ENCODE measurements at regions of chr10 and their contacts with region 1.

Region 1: GRCh38 chr10:63976538-63976937 is 455.3 kb downstream of the REEP3 start:
- DNase-seq: peak in 2 of 3 donors; percentile 19 to 65
- ATAC-seq: peak; percentile 64 to 80
- H3K4me3 ChIP-seq: no peak overlapping the region
- H3K27ac ChIP-seq: no peak overlapping the region
- H3K4me1 ChIP-seq: no peaks in the 10 kb centered on the region
- H3K27me3 ChIP-seq: no peaks in the 10 kb centered on the region

Region 2: DNA sequence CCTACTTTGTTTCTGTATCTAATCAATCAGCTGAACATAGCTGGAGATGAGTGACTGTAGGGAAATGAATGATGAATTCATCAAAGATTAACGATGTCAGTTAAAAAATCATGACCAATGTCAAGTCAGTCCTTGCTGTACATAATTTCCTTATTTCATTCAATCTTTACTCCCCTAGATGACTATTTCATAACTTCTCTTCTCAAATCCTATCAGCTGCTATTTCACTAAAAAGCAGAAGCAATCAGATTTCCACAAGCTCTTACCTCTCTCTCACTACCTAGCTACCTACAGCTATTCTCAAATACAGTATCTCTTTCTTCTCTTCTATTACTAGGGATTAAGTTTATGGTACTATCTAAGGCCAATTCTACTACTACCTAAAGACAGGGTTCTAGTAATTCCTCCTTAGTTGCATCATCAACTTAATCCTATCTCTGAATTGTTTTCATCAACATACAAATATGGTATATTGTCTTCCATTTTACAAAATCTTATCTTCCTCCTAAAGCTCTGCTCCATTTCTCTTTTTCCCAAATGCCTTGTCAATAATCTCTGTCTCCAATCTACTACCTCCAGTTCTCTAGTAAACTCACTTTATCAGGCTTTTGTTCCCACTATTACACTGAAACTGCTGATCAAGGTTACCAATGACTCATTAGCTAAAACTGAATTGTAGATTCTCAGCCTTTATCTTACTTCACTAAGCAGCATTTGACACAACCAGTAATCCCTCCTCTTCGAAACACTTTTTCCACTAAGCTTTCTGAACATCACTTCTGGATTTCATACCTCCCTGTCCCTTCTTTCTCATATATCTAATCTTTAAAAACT is 539.2 kb before region 1 on chr10:
- intact Hi-C with region 1: no loop called
- DNase-seq: no peak
- ATAC-seq: no peak
- H3K4me3 ChIP-seq: no peak overlapping the region
- H3K27ac ChIP-seq: no peak overlapping the region
- H3K4me1 ChIP-seq: peaks cover 6% of the 10 kb centered on the region
- H3K27me3 ChIP-seq: no peaks in the 10 kb centered on the region

Region 3: DNA sequence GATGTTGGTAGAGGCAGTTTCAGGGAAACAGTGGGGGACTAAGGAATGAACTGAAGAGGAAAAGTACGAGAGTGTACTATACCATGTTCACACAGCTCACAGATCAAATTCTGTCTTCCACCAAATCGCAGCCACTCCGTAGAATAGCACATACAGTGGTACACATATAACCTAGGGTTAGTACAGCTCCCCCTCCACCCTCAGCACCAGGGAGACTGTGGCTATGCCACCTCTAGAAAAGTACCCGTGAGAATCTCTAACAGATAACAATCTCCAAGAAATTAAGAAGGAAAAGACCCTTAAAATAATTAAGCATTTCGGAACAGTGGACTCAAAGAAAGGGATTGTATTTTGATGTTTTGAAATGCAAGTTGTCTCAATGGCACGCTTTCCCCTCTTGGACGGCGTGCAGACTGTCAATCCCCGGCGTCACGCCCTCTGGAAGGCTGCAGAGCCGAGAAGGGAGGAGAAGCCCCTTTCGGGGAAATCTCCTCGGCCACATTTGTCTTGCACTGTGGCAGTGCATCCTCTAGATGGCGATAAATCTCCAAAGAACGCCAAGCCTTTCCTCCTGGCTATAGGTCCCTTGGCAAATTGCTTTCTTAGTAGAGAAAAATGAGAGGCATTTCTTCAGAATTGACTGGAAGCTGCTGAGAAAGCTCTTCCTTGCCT is 110.3 kb before region 1 on chr10:
- intact Hi-C with region 1: loop called in 2 of 4 experiments (anchors 5 kb)
- DNase-seq: peak; percentile 27 to 74 (median 72)
- ATAC-seq: peak; percentile 74 to 80
- H3K4me3 ChIP-seq: no peak overlapping the region
- H3K27ac ChIP-seq: no peak overlapping the region
- H3K4me1 ChIP-seq: no peaks in the 10 kb centered on the region
- H3K27me3 ChIP-seq: no peaks in the 10 kb centered on the region

Region 4: GRCh38 chr10:63878428-63878827 is 98.1 kb before region 1 on chr10:
- intact Hi-C with region 1: loop called in 3 of 4 experiments (anchors 2 to 5 kb)
- DNase-seq: no peak
- ATAC-seq: no peak
- H3K4me3 ChIP-seq: no peak overlapping the region
- H3K27ac ChIP-seq: no peak overlapping the region
- H3K4me1 ChIP-seq: no peaks in the 10 kb centered on the region
- H3K27me3 ChIP-seq: no peaks in the 10 kb centered on the region

Region 5: GRCh38 chr10:64067009-64067606 is 90.6 kb after region 1 on chr10:
- intact Hi-C with region 1: no loop called
- DNase-seq: no peak
- ATAC-seq: peak in 1 of 2 donors; percentile 36
- H3K4me3 ChIP-seq: no peak overlapping the region
- H3K27ac ChIP-seq: no peak overlapping the region
- H3K4me1 ChIP-seq: peaks cover 2% of the 10 kb centered on the region
- H3K27me3 ChIP-seq: no peaks in the 10 kb centered on the region

Measured in right cardiac atrium (tissue), 5 donors.